ENCODE measurements at regions of chr5 and their contacts with region 1.

Region 1: GRCh38 chr5:147857302-147858129 is 21.0 kb upstream of the SCGB3A2 start:
- DNase-seq: peak; percentile 80
- H3K4me3 Mint-ChIP-seq: no peak overlapping the region
- H3K27ac Mint-ChIP-seq: no peak overlapping the region
- H3K4me1 Mint-ChIP-seq: no peaks in the 10 kb centered on the region
- H3K27me3 Mint-ChIP-seq: no peaks in the 10 kb centered on the region
- CTCF ChIP-seq: peak; percentile 76

Region 2: DNA sequence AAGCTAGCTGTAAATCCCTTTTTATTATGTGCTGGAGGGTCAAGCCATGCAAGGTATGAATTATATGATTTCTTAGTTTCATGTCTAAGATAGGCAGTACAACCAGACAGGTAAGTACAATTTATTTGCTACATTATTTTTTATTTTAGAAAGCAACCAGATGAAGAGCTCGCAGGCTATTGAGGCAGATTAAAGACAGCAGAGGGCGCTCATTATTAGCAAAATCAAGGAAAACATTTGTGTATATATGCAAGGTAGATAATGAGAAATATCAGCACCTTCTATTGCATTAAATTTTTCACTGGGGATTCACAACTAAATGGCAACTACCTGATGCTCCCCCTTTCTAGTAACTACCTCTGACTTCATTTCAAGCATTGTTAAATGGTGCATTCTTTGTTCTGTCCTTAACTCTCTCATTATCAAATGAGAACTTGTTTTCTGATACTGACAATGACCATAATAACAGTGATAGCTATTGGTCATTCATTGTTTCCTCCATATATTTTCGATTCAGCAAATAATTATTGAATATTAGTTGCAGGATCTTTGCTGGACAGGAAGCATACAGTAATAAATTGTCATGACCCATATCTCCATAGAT is 29.6 kb after region 1 on chr5:
- CTCF ChIA-PET with region 1: interaction called, 225 read pairs
- POLR2A ChIA-PET with region 1: no interaction called
- intact Hi-C with region 1: loop called (anchors 1 kb)
- DNase-seq: peak; percentile 75
- H3K4me3 Mint-ChIP-seq: no peak overlapping the region
- H3K27ac Mint-ChIP-seq: no peak overlapping the region
- H3K4me1 Mint-ChIP-seq: peaks cover 16% of the 10 kb centered on the region
- H3K27me3 Mint-ChIP-seq: no peaks in the 10 kb centered on the region
- CTCF ChIP-seq: peak; percentile 76

Region 3: GRCh38 chr5:148120317-148120716 is 262.8 kb after region 1 on chr5:
- CTCF ChIA-PET with region 1: interaction called, 9 read pairs
- POLR2A ChIA-PET with region 1: no interaction called
- intact Hi-C with region 1: loop called (anchors 5 kb)
- DNase-seq: no peak
- H3K4me3 Mint-ChIP-seq: no peak overlapping the region
- H3K27ac Mint-ChIP-seq: no peak overlapping the region
- H3K4me1 Mint-ChIP-seq: no peaks in the 10 kb centered on the region
- H3K27me3 Mint-ChIP-seq: no peaks in the 10 kb centered on the region
- CTCF ChIP-seq: no peak

Region 4: DNA sequence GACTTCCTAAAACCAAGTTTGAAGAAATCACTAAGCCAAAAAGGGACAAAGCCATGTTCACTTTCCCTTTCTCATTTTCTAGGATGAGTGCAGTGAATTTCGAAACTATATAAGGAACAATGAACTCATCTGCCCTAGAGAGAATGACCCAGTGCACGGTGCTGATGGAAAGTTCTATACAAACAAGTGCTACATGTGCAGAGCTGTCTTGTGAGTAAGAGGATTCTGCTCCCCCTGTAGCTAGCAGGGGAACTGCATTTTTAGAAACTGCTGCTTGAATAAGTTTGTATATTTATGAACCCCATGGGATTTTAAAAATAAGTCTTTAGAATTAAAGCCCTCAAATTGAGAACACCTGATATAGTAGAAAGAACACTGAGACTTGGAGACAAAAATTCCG is 268.1 kb after region 1 on chr5:
- CTCF ChIA-PET with region 1: interaction called, 11 read pairs
- POLR2A ChIA-PET with region 1: no interaction called
- intact Hi-C with region 1: loop called (anchors 5 kb)
- DNase-seq: peak; percentile 41
- H3K4me3 Mint-ChIP-seq: no peak overlapping the region
- H3K27ac Mint-ChIP-seq: no peak overlapping the region
- H3K4me1 Mint-ChIP-seq: no peaks in the 10 kb centered on the region
- H3K27me3 Mint-ChIP-seq: no peaks in the 10 kb centered on the region
- CTCF ChIP-seq: peak; percentile 24